Activated T-helper 2 cell treated with anti-CD3 and anti-CD28 coated beads, Interferon-gamma antibody, Interleukin-2, Interleukin-4, amounts not matched to agents 10 μg/mL and 5 μg/mL and 100 μg/mL, durations not matched to agents 14 hours and 24 hours and 36 hours (primary cell): ENCODE measurements at regions of chr9 and their contacts with region 1.

Region 1: DNA sequence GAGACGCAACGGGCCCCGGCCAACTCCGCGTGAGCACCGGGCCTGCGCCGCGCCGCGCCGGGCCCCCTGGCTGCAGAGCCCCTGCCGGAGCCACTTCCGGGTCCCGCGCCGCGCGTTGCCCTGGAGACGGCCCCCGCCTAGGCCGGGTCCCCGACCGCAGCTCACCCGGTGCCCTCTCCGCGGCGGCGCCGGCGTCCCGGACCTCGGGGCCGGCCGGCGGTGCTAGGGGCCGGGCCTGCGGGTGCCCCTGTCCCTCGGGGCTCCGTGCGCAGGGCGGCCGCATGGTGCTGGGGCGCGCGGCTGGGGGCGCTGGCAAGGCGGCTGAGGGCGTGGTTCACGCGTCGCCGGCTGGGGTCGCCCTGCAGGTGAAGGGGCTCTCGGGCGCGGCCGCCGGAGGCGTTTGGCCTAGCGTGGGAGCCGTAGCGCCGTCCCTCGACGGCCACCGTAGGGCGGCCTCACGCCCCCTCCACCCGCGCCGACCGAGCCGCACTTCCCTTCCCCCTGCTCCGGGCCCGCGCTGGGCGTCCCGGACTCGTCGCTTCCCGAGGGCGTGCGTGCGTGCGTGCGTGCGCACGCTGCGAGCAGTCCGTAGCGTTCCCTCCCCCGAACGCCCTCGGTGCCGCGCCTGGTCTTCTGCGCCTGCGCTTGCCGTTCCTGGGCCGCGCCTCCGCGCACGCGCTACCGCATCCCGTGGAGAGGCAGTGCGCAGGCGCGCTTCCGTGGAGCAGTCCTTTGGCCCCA is at the start of gene TMEM250:
- DNase-seq: peak; percentile 95
- H3K4me3 Mint-ChIP-seq: peak within 1 kb of the TSS; percentile 83
- H3K27ac Mint-ChIP-seq: peak within 1 kb of the TSS; percentile 78
- H3K4me1 Mint-ChIP-seq: peaks cover 9% of the 10 kb centered on the region
- H3K27me3 Mint-ChIP-seq: no peaks in the 10 kb centered on the region
- total RNA-seq, gene TMEM250: 43.1 and 43.5 TPM in 2 replicates

Region 2: DNA sequence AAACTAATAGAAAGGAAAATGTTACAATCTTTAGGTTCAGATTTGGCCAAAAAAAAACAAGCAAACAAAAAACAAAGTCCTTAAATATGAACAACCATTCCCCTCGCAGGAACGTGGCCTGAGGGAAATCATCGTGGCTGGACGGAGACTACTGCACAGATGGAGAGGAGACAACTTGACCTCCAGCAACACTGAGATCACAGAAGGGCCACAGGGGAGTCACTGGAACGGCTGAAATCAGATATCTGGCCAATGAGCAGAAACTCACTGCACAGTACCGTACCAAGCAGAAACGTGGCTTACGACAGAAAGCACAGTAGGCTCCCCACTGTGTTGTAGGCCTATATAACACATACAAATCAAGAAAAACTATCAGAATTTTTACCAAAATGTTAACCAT is 238.9 kb before region 1 on chr9:
- intact Hi-C with region 1: no loop called
- DNase-seq: no peak
- H3K4me3 Mint-ChIP-seq: no peak overlapping the region
- H3K27ac Mint-ChIP-seq: no peak overlapping the region
- H3K4me1 Mint-ChIP-seq: peaks cover 20% of the 10 kb centered on the region
- H3K27me3 Mint-ChIP-seq: no peaks in the 10 kb centered on the region

Region 3: DNA sequence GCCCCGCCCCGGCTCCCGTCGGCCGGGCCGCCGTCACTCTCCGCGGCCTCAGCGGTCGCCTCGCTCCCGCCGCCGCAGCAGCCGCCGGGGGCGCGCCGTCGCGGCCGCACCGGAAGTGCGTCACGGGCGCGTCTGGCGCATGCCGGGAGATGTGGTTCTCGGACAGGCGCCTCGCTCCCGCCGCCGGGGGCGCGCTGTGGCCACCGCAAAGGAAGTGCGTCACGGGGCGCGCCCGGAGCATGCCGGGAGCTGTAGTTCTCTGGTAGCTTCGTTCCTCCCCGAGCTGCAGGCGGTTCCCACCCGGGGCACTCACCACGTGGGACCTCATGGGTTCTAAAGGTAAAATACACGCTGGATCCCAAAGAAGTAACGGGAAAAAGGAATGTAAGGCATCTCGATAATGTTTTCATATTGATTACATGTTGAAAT is 157.2 kb before region 1 on chr9 and contains the start of gene UBAC1:
- intact Hi-C with region 1: loop called (anchors 1 kb)
- DNase-seq: peak; percentile 92
- H3K4me3 Mint-ChIP-seq: peak within 1 kb of the TSS; percentile 89
- H3K27ac Mint-ChIP-seq: peak within 1 kb of the TSS; percentile 68
- H3K4me1 Mint-ChIP-seq: peaks cover 22% of the 10 kb centered on the region
- H3K27me3 Mint-ChIP-seq: no peaks in the 10 kb centered on the region
- total RNA-seq, gene UBAC1: 42.3 and 47.2 TPM in 2 replicates

Region 4: GRCh38 chr9:136093995-136094881 is 24.3 kb before region 1 on chr9:
- intact Hi-C with region 1: loop called (anchors 1 kb)
- DNase-seq: no peak
- H3K4me3 Mint-ChIP-seq: peak overlapping the region; percentile 66
- H3K27ac Mint-ChIP-seq: no peak overlapping the region
- H3K4me1 Mint-ChIP-seq: peaks cover 4% of the 10 kb centered on the region
- H3K27me3 Mint-ChIP-seq: peaks cover 18% of the 10 kb centered on the region

Region 5: GRCh38 chr9:136245219-136246150 is 127.0 kb after region 1 on chr9 and contains the start of gene QSOX2:
- intact Hi-C with region 1: loop called (anchors 10 kb)
- DNase-seq: peak; percentile 81
- H3K4me3 Mint-ChIP-seq: peak within 1 kb of the TSS; percentile 92
- H3K27ac Mint-ChIP-seq: peak within 1 kb of the TSS; percentile 90
- H3K4me1 Mint-ChIP-seq: peaks cover 26% of the 10 kb centered on the region
- H3K27me3 Mint-ChIP-seq: peaks cover 4% of the 10 kb centered on the region
- total RNA-seq, gene QSOX2: 24.9 and 25.4 TPM in 2 replicates

Region 6: DNA sequence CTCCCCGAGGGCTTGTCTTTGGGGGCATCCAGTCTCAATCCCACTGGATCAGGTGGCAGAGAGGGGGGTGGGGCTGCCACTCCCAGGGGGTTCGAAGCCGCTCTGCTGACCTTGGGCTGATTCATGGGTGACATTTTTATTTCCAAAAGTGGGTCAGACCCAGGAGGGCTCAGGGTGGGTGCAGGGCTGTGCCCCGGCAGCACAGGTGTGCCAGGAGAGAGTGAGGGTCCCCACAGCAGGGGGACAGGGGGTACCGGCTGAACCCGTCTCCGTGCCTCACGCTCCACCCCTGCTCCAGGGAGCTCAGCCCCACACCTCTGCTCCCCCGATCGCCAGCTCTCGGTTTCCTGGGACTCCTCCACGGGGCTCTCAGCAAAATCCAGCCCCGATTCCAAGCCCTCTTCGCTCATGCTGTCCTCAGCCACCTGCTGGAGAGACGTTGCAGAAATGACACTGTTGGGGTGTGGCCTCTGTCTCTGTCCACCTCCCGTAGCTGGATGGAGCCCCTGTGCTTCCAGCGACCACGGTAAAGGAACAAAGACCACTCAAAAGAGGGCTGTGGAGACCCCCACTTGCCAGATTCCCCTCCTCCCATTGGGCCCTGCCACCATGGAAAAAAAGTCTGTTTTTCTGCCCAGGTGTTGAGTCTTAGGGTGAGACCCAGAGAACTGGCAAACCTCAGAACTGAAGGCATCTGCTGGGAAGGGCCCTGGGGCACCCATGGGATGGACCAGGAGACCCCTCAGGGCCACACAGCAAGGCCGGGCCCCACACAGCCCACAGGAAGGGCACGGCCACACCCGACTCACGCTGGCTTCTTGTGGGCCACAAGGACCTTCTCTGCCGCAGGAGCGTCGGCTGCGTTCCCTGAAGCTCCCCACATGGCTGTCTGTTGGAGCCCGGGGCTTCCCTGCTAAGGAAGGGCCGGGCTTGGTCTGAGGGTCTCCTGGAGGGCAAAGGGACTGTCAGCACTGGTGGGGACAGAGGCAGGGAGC is 137.7 kb after region 1 on chr9:
- intact Hi-C with region 1: no loop called
- DNase-seq: no peak
- H3K4me3 Mint-ChIP-seq: no peak overlapping the region
- H3K27ac Mint-ChIP-seq: no peak overlapping the region
- H3K4me1 Mint-ChIP-seq: no peaks in the 10 kb centered on the region
- H3K27me3 Mint-ChIP-seq: no peaks in the 10 kb centered on the region